CD4-positive, alpha-beta memory T cell (primary cell): ENCODE measurements at regions of chr7 and their contacts with region 1.

Region 1: DNA sequence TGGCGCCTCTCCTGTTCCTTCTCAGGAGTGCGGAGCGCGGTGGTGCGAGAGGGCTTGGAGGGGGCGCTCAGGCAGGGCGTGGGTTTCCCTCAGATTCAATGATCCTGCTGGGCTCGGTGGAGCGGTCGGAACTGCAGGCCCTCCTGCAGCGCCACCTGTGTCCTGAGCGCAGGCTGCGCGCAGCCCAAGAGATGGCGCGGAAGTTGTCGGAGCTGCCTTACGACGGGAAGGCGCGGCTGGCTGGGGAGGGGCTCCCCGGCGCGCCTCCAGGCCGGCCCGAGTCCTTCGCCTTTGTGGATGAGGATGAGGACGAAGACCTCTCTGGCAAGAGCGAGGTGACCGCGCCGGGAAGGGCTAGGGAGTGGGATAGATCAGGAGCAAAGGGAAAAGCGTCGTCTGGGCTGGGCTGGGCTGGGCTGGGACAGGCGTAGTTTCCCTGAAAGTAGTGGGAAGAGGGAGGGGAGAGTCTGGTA is 17.0 kb downstream of the FAM131B start:
- DNase-seq: peak; percentile 52 to 64 (median 58)
- H3K4me3 ChIP-seq: no peak overlapping the region
- H3K4me3 Mint-ChIP-seq: peak overlapping the region; percentile 74 to 87 (median 80)
- H3K27ac ChIP-seq: no peak overlapping the region
- H3K27ac Mint-ChIP-seq: peak overlapping the region in 4 of 7 donors; percentile 55 to 70 (median 68)
- H3K4me1 ChIP-seq: peaks cover 4% of the 10 kb centered on the region
- H3K4me1 Mint-ChIP-seq: peaks cover 5 to 9% (median 7%) of the 10 kb centered on the region in 4 donors
- H3K27me3 ChIP-seq: no peaks in the 10 kb centered on the region
- H3K27me3 Mint-ChIP-seq: peaks cover 0 to 6% of the 10 kb centered on the region in 2 donors

Region 2: GRCh38 chr7:142338633-142339501 is 1006.6 kb before region 1 on chr7:
- CTCF ChIA-PET with region 1: no interaction called
- POLR2A ChIA-PET with region 1: no interaction called
- intact Hi-C with region 1: no loop called
- DNase-seq: no peak
- H3K4me3 ChIP-seq: no peak overlapping the region
- H3K4me3 Mint-ChIP-seq: peak overlapping the region in 2 of 8 donors; percentile 7 to 63
- H3K27ac ChIP-seq: no peak overlapping the region
- H3K27ac Mint-ChIP-seq: peak overlapping the region in 5 of 7 donors; percentile 21 to 68 (median 35)
- H3K4me1 ChIP-seq: no peaks in the 10 kb centered on the region
- H3K4me1 Mint-ChIP-seq: peaks cover 0 to 17% (median 6%) of the 10 kb centered on the region in 4 donors
- H3K27me3 ChIP-seq: no peaks in the 10 kb centered on the region
- H3K27me3 Mint-ChIP-seq: peaks cover 6 to 9% of the 10 kb centered on the region in 2 donors

Region 3: DNA sequence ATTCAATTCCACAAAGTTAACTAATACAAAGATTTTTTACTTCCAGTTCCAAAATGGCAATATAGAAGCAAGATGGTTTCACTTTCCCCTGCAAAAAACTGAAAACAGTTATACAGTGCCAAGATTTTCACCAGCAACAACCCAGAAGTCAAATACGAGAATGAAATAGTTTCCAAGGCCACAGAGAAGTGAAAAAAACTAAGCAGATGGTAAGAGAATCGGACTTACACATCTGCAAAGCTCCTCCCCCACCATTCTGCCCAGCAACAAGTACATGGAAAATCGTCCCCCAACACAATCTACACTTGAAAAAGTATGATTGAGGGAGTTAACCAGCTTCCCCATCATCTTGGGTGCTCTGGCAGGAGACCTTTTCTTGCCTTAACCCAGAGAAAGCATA is 353.0 kb before region 1 on chr7:
- CTCF ChIA-PET with region 1: no interaction called
- POLR2A ChIA-PET with region 1: no interaction called
- intact Hi-C with region 1: no loop called
- DNase-seq: no peak
- H3K4me3 ChIP-seq: no peak overlapping the region
- H3K4me3 Mint-ChIP-seq: peak overlapping the region in 2 of 8 donors; percentile 29 to 57
- H3K27ac ChIP-seq: no peak overlapping the region
- H3K27ac Mint-ChIP-seq: no peak overlapping the region
- H3K4me1 ChIP-seq: no peaks in the 10 kb centered on the region
- H3K4me1 Mint-ChIP-seq: no peaks in the 10 kb centered on the region
- H3K27me3 ChIP-seq: no peaks in the 10 kb centered on the region
- H3K27me3 Mint-ChIP-seq: peaks cover 8 to 18% of the 10 kb centered on the region in 2 donors

Region 4: GRCh38 chr7:143334244-143334643 is 11.2 kb before region 1 on chr7:
- CTCF ChIA-PET with region 1: interaction called, 32 read pairs
- POLR2A ChIA-PET with region 1: no interaction called
- intact Hi-C with region 1: no loop called
- DNase-seq: no peak
- H3K4me3 ChIP-seq: no peak overlapping the region
- H3K4me3 Mint-ChIP-seq: no peak overlapping the region
- H3K27ac ChIP-seq: no peak overlapping the region
- H3K27ac Mint-ChIP-seq: no peak overlapping the region
- H3K4me1 ChIP-seq: no peaks in the 10 kb centered on the region
- H3K4me1 Mint-ChIP-seq: peaks cover 0 to 4% (median 0%) of the 10 kb centered on the region in 4 donors
- H3K27me3 ChIP-seq: no peaks in the 10 kb centered on the region
- H3K27me3 Mint-ChIP-seq: peaks cover 12 to 17% of the 10 kb centered on the region in 2 donors

Region 5: DNA sequence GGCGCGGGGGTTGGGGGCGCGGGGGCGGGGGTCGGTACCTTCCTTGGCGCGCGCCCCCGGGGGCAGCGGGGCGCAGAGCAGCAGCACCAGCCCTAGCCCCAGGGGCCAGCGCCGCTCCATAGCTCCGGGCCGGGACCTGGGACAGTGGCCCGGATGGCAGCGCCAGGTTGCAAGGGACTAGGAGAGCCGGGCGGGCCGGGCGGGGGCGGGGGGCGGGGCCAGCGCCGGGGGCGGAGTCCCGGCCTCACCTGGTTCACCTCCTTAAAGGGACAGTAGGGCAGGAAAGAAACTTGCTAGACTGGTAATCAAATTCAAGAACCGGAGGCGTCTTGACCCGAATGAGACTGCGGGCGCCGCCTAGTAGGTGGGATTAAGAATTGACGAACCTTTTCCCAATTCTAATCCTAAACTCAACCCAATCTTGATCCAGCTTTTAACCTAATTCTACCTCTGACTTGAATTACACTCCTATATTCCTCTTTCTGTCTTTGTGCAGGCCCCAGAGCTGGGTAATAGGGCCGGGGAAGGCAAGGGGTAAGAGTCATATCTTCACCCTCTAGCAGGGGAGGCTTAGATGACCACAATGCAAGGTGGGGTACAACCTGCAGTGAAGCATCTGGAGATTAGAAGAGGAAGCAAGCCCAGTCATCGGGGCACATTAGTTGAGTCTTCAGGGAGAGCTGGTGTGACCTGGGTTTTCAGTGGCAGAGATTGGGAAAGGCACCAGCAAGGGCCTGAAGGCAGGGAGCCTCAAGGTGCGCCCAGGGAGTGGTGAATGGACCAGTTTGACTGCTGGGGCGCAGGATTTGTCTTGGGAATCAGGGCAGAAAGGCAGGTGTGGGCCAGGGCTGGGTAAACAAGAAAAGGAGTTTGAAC is 63.5 kb after region 1 on chr7 and contains the start of gene EPHA1:
- CTCF ChIA-PET with region 1: interaction called, 9 read pairs
- POLR2A ChIA-PET with region 1: no interaction called
- intact Hi-C with region 1: loop called (anchors 1 kb)
- DNase-seq: peak; percentile 52 to 62 (median 57)
- H3K4me3 ChIP-seq: peak within 1 kb of the TSS; percentile 58 to 66
- H3K4me3 Mint-ChIP-seq: peak within 1 kb of the TSS; percentile 89 to 97 (median 92)
- H3K27ac ChIP-seq: peak within 1 kb of the TSS; percentile 15
- H3K27ac Mint-ChIP-seq: peak within 1 kb of the TSS; percentile 76 to 96 (median 96)
- H3K4me1 ChIP-seq: peaks cover 48% of the 10 kb centered on the region
- H3K4me1 Mint-ChIP-seq: peaks cover 47 to 73% (median 55%) of the 10 kb centered on the region in 4 donors
- H3K27me3 ChIP-seq: no peaks in the 10 kb centered on the region
- H3K27me3 Mint-ChIP-seq: no peaks in the 10 kb centered on the region
- total RNA-seq, gene EPHA1: 30.7 to 34.4 TPM

Region 6: GRCh38 chr7:143416565-143417149 is 71.2 kb after region 1 on chr7:
- CTCF ChIA-PET with region 1: interaction called, 24 read pairs
- POLR2A ChIA-PET with region 1: no interaction called
- intact Hi-C with region 1: no loop called
- DNase-seq: peak in 4 of 5 donors; percentile 47 to 62 (median 53)
- H3K4me3 ChIP-seq: no peak overlapping the region
- H3K4me3 Mint-ChIP-seq: no peak overlapping the region
- H3K27ac ChIP-seq: no peak overlapping the region
- H3K27ac Mint-ChIP-seq: no peak overlapping the region
- H3K4me1 ChIP-seq: no peaks in the 10 kb centered on the region
- H3K4me1 Mint-ChIP-seq: peaks cover 0 to 9% (median 8%) of the 10 kb centered on the region in 4 donors
- H3K27me3 ChIP-seq: no peaks in the 10 kb centered on the region
- H3K27me3 Mint-ChIP-seq: no peaks in the 10 kb centered on the region